Ovary (tissue), 10 donors: ENCODE measurements at regions of chr3 and their contacts with region 1.

Region 1: GRCh38 chr3:49276475-49277382 is at the start of gene C3orf62:
- DNase-seq: peak; percentile 92 to 95 (median 92)
- H3K4me3 ChIP-seq: peak within 1 kb of the TSS; percentile 42
- H3K27ac ChIP-seq: peak within 1 kb of the TSS; percentile 84 to 97
- H3K4me1 ChIP-seq: peaks cover 15% of the 10 kb centered on the region
- H3K27me3 ChIP-seq: no peaks in the 10 kb centered on the region
- CTCF ChIP-seq: no peak
- EP300 ChIP-seq: no peak
- POLR2A ChIP-seq: peak; percentile 57
- total RNA-seq, gene C3orf62: 1.3 to 11.1 (median 6.6) TPM

Region 2: GRCh38 chr3:49171119-49171774 is 105.5 kb before region 1 on chr3 and contains the start of gene KLHDC8B:
- intact Hi-C with region 1: loop called (anchors 5 to 10 kb)
- DNase-seq: peak; percentile 90 to 93 (median 91)
- H3K4me3 ChIP-seq: peak within 1 kb of the TSS; percentile 72
- H3K27ac ChIP-seq: peak within 1 kb of the TSS; percentile 75 to 89
- H3K4me1 ChIP-seq: peaks cover 14% of the 10 kb centered on the region
- H3K27me3 ChIP-seq: no peaks in the 10 kb centered on the region
- CTCF ChIP-seq: peak; percentile 76 to 95 (median 94)
- EP300 ChIP-seq: no peak
- POLR2A ChIP-seq: peak; percentile 68
- total RNA-seq, gene KLHDC8B: 67.1 to 244 (median 131) TPM